ENCODE measurements at regions of chr4 and their contacts with region 1.

Region 1: DNA sequence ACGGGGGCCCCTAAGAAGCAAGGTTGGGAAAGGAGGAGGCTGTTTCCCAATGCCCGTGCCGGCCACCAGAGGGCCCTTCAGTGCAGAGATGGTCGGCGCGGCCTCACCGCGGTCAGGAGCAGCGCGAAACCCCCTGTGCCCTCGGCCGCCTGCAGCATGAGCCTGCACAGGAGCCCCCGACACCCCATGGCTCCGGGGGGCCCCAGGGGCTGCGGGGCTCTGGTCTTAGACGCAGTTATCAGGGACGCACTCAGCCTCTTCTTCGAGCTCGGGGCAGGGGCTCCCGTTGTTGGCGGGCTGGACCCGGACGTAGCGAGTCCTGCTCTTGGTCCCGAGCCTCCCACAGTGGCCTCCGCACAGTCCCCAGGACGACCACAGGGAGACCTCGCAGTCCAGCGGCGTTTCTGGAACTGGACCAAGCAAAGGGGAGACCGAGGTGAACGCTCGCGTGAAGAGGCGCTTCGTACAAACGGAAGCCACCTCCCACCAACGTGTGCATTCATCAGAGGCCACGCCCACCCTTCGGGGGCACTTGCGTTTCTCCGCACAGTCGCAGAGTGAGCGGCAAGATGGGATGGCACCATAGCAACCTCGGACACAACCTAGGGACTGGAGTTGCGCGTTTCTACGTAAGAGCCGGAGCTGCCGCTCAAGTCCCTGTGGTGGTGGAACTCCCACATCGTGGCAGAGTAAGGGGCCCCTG is 5.0 kb downstream of the SPON2 start:
- DNase-seq: peak; percentile 83
- H3K4me3 Mint-ChIP-seq: peak overlapping the region; percentile 79
- H3K27ac Mint-ChIP-seq: peak overlapping the region; percentile 69
- H3K4me1 Mint-ChIP-seq: peaks cover 15% of the 10 kb centered on the region
- H3K27me3 Mint-ChIP-seq: peaks cover 13% of the 10 kb centered on the region

Region 2: DNA sequence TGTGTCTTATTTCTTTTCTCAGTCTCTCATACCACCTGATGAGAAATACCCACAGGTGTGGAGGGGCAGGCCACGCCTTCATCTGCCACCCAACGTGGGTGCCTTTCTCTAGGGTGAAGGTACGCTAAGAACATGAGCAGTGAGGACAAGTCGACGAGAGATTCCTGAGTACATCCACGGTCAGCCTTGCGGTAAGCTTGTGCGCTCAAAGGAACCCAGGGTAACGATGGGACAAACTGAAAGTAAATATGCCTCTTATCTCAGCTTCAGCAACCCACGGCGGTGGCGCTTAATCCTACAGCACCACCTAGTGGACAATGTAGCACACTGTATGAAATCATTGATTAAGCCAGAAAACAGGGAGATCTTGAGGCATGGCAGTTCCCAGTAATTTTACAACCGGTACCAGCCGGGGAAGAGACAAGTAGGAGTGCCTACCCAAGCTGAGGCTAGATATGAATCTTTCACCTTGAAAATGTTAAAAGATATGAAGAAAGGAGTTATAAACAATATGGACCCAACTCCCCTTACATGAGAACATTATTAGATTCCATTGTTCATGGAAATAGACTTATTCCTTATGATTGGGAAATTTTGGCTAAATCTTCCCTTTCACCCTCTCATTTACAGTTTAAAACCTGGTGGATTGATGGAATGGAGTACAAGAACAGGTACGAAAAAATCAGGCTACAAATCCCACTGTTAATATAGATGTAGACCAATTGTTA is 925.1 kb before region 1 on chr4:
- intact Hi-C with region 1: no loop called
- DNase-seq: peak; percentile 53
- H3K4me3 Mint-ChIP-seq: peak overlapping the region; percentile 70
- H3K27ac Mint-ChIP-seq: peak overlapping the region; percentile 15
- H3K4me1 Mint-ChIP-seq: peaks cover 13% of the 10 kb centered on the region
- H3K27me3 Mint-ChIP-seq: no peaks in the 10 kb centered on the region

Region 3: DNA sequence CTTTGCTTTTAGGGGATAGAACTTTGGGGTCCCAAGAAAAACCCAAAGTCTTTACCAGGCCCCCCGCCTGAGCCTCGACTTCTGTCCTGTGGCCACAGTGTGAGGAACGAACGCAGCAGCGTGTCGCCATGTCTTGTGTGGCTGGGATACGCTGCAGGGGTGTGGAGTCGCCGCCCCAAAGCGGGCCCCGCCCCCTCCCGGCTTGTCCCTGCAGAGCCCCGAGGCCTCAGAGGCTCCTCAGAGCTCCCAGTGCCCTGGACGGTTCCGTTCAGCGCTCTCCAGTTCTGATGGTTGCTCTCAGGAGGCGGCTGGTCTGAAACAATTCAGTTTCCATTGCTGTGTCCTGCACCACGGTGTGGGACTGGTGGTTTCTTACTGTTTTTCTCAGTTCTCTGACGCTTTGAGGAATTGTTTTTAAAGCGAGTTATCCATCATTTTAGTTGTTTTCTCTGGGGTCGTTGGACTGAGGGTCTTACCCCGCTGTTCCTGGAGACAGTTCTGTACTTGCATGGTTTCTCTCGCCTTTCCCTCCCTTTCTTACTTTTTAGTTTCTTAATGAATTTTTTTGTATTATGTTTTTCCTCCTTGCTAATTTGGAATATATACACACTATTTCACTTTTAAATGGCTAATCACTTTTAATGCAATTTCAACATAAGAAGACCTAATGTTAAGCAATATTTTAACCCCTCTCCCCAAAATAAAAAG is 182.1 kb before region 1 on chr4:
- intact Hi-C with region 1: no loop called
- DNase-seq: peak; percentile 61
- H3K4me3 Mint-ChIP-seq: peak overlapping the region; percentile 42
- H3K27ac Mint-ChIP-seq: no peak overlapping the region
- H3K4me1 Mint-ChIP-seq: peaks cover 17% of the 10 kb centered on the region
- H3K27me3 Mint-ChIP-seq: no peaks in the 10 kb centered on the region

Region 4: GRCh38 chr4:1130316-1131186 is 36.8 kb before region 1 on chr4:
- intact Hi-C with region 1: loop called (anchors 1 kb)
- DNase-seq: peak; percentile 70
- H3K4me3 Mint-ChIP-seq: no peak overlapping the region
- H3K27ac Mint-ChIP-seq: no peak overlapping the region
- H3K4me1 Mint-ChIP-seq: peaks cover 5% of the 10 kb centered on the region
- H3K27me3 Mint-ChIP-seq: peaks cover 14% of the 10 kb centered on the region

Region 5: GRCh38 chr4:1187182-1187581 is 19.8 kb after region 1 on chr4:
- intact Hi-C with region 1: loop called (anchors 1 kb)
- DNase-seq: peak; percentile 34
- H3K4me3 Mint-ChIP-seq: no peak overlapping the region
- H3K27ac Mint-ChIP-seq: peak overlapping the region; percentile 28
- H3K4me1 Mint-ChIP-seq: peaks cover 30% of the 10 kb centered on the region
- H3K27me3 Mint-ChIP-seq: no peaks in the 10 kb centered on the region

Region 6: DNA sequence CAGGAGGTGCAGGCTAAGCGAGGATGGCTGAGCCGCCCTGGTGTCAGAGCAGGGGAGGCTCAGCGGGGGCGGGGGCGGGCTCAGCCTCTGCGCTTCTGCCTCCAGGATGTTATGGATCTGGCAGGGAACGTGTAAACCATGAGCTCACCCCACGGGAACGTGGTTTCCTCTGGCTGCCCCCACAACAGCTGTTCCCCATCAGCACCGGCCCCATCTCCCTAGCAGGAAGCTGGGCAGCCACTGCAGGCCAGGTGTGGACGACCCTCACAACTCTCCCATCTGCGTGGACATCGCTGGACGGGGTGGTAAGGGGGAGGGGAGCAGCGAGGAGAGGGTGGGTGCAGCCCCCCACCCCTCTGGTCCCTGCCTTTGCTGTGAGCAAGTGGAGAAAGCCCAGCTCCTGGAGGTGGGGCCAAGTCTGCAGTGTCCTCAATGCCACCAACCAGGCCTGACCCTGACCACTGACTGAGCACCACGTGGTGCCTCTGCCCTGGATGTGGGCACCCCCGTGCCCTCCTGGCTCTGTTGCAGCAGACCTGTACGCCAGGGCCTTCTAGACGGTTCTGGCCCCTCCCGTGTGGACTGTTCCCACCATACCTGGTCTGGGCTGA is 33.1 kb after region 1 on chr4:
- intact Hi-C with region 1: loop called (anchors 1 kb)
- DNase-seq: no peak
- H3K4me3 Mint-ChIP-seq: peak overlapping the region; percentile 75
- H3K27ac Mint-ChIP-seq: peak overlapping the region; percentile 100
- H3K4me1 Mint-ChIP-seq: peaks cover 41% of the 10 kb centered on the region
- H3K27me3 Mint-ChIP-seq: no peaks in the 10 kb centered on the region

Region 7: GRCh38 chr4:1216869-1217294 is 49.5 kb after region 1 on chr4:
- intact Hi-C with region 1: loop called (anchors 1 kb)
- DNase-seq: peak; percentile 61
- H3K4me3 Mint-ChIP-seq: peak overlapping the region; percentile 60
- H3K27ac Mint-ChIP-seq: peak overlapping the region; percentile 87
- H3K4me1 Mint-ChIP-seq: peaks cover 27% of the 10 kb centered on the region
- H3K27me3 Mint-ChIP-seq: no peaks in the 10 kb centered on the region

Region 8: GRCh38 chr4:1249148-1249730 is 81.8 kb after region 1 on chr4:
- intact Hi-C with region 1: loop called (anchors 1 kb)
- DNase-seq: peak; percentile 83
- H3K4me3 Mint-ChIP-seq: peak overlapping the region; percentile 89
- H3K27ac Mint-ChIP-seq: peak overlapping the region; percentile 96
- H3K4me1 Mint-ChIP-seq: peaks cover 57% of the 10 kb centered on the region
- H3K27me3 Mint-ChIP-seq: no peaks in the 10 kb centered on the region

Region 9: GRCh38 chr4:1351854-1352633 is 184.6 kb after region 1 on chr4:
- intact Hi-C with region 1: loop called (anchors 1 kb)
- DNase-seq: peak; percentile 84
- H3K4me3 Mint-ChIP-seq: no peak overlapping the region
- H3K27ac Mint-ChIP-seq: peak overlapping the region; percentile 70
- H3K4me1 Mint-ChIP-seq: peaks cover 20% of the 10 kb centered on the region
- H3K27me3 Mint-ChIP-seq: no peaks in the 10 kb centered on the region

Measured in activated T-helper 1 cell treated with anti-CD3 and anti-CD28 coated beads, Interleukin-12 subunit alpha, Interleukin-12 subunit beta, Interleukin-2, Interleukin-4 antibody, amounts not matched to agents 30 ng/mL and 10 ng/mL and 1 ng/mL, durations not matched to agents 14 hours and 24 hours and 36 hours (primary cell).